Activated CD4-positive, alpha-beta T cell treated with anti-CD3 and anti-CD28 coated beads for 36 hours (primary cell): ENCODE measurements at regions of chr16 and their contacts with region 1.

Region 1: DNA sequence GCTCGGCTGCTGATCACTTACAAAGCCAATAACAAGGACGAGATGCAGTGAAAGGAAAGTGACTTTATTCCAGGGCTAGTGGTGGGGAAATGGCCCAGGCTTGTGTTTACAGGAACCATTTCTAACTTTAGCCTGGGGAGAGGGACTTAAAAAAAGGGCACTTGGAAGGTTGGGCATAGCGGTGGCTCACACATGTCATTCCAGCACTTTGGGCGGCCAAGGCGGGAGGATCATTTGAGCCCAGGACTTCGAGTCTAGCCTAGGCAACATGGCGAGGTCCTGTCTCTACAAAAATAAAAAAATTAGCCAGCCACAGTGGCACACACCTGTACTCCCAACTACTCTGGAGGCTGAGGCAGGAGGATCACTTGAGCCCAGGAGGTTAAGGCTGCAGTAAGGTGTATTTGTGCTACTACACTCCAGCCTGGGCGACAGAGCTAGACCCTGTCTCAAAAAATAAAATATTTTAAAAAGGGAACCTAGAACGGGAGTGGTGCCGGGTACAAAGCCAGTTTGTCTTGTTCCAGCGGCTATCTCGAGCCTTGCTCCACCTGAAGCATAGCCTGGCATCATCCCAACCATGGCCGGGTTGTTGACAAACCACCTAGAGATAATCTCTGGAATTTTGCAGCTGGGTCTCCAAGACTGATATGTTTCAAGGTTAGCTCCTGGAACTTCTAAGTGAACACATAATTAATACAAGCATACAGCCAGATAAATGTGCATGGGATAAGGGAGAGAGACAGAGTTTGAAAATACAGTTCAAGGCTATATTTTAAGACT is 5.7 kb upstream of the TVP23A start:
- DNase-seq: no peak
- ATAC-seq: no peak
- H3K4me3 Mint-ChIP-seq: no peak overlapping the region
- H3K27ac Mint-ChIP-seq: no peak overlapping the region
- H3K4me1 Mint-ChIP-seq: no peaks in the 10 kb centered on the region
- H3K27me3 Mint-ChIP-seq: no peaks in the 10 kb centered on the region

Region 2: DNA sequence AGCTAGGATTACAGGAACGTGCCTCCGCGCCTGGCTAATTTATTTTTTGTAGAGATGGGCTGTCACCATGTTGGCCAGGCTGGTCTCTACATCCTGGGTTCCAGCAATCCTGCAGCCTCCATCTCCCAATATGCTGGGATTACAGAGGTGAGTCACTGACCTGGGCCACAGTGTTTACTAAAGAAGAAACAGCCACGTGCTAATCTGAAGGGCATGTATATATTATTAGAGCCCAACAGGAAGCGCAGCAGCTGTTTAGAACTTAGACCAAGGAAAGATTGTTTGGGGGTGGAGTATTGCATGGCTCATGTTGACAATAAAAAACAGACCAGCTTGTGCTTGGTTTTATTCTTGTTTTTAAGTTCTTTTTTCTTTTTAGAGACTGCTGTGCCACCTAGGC is 1672.7 kb before region 1 on chr16:
- CTCF ChIA-PET with region 1: no interaction called
- POLR2A ChIA-PET with region 1: no interaction called
- intact Hi-C with region 1: loop called in 1 of 2 experiments (anchors 5 kb)
- DNase-seq: no peak
- ATAC-seq: no peak
- H3K4me3 Mint-ChIP-seq: no peak overlapping the region
- H3K27ac Mint-ChIP-seq: no peak overlapping the region
- H3K4me1 Mint-ChIP-seq: no peaks in the 10 kb centered on the region
- H3K27me3 Mint-ChIP-seq: peaks cover 20% of the 10 kb centered on the region

Region 3: DNA sequence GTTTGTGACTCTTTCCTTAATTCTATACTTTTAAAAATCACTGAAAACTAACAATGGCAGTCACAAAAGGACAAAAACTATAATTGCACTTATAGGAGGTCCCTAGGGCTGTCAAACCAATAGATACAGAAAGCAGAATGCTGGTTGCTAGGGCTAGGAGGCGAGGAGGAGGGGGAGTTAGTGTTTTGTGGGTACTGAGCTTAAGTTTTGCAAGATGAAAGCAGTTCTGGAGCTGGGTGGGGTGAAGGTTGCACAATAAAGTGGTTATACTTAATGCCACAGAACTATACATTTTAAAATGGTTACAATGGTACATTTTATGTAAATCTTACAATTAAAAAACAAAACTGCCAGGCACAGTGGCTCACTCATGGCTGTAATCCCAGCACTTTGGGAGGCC is 53.4 kb before region 1 on chr16:
- CTCF ChIA-PET with region 1: no interaction called
- POLR2A ChIA-PET with region 1: no interaction called
- intact Hi-C with region 1: loop called in 1 of 2 experiments (anchors 5 kb)
- DNase-seq: no peak
- ATAC-seq: no peak
- H3K4me3 Mint-ChIP-seq: no peak overlapping the region
- H3K27ac Mint-ChIP-seq: no peak overlapping the region
- H3K4me1 Mint-ChIP-seq: peaks cover 10% of the 10 kb centered on the region
- H3K27me3 Mint-ChIP-seq: peaks cover 3% of the 10 kb centered on the region